Activated T-helper 1 cell treated with anti-CD3 and anti-CD28 coated beads, Interleukin-12 subunit alpha, Interleukin-12 subunit beta, Interleukin-2, Interleukin-4 antibody, amounts not matched to agents 30 ng/mL and 10 ng/mL and 1 ng/mL, durations not matched to agents 14 hours and 24 hours and 36 hours (primary cell): ENCODE measurements at regions of chr4 and their contacts with region 1.

Region 1: GRCh38 chr4:88533937-88534750 is 10.6 kb upstream of the PYURF start:
- DNase-seq: no peak
- H3K4me3 Mint-ChIP-seq: no peak overlapping the region
- H3K27ac Mint-ChIP-seq: no peak overlapping the region
- H3K4me1 Mint-ChIP-seq: peaks cover 6% of the 10 kb centered on the region
- H3K27me3 Mint-ChIP-seq: no peaks in the 10 kb centered on the region

Region 2: GRCh38 chr4:88659055-88659889 is 125.1 kb after region 1 on chr4:
- intact Hi-C with region 1: loop called (anchors 1 kb)
- DNase-seq: no peak
- H3K4me3 Mint-ChIP-seq: no peak overlapping the region
- H3K27ac Mint-ChIP-seq: no peak overlapping the region
- H3K4me1 Mint-ChIP-seq: peaks cover 12% of the 10 kb centered on the region
- H3K27me3 Mint-ChIP-seq: no peaks in the 10 kb centered on the region

Region 3: DNA sequence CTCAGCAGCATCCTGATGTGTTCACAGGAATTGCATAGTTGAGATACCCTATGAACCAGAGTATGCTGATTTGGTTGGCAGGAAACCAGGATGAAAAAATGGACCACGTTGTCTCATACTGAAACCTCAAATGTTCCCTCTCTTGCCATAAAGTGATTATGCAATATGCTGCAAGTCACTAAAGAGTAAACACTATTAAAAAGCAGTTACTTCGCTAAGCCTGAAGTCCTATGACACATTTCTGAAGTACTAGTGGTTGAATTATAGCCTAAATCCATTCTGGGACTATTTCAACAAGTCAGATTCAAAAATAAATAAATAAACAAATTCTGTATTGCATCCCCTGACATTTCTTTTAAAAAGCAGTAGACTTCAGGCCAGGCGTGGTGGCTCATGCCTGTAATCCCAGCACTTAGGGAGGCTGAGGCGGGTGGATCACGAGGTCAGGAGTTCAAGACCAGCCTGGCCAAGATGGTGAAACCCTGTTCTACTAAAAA is 269.5 kb after region 1 on chr4:
- intact Hi-C with region 1: loop called (anchors 5 kb)
- DNase-seq: peak; percentile 17
- H3K4me3 Mint-ChIP-seq: no peak overlapping the region
- H3K27ac Mint-ChIP-seq: no peak overlapping the region
- H3K4me1 Mint-ChIP-seq: peaks cover 13% of the 10 kb centered on the region
- H3K27me3 Mint-ChIP-seq: peaks cover 16% of the 10 kb centered on the region

Region 4: GRCh38 chr4:89024051-89024675 is 490.0 kb after region 1 on chr4:
- intact Hi-C with region 1: loop called (anchors 1 kb)
- DNase-seq: peak; percentile 42
- H3K4me3 Mint-ChIP-seq: no peak overlapping the region
- H3K27ac Mint-ChIP-seq: no peak overlapping the region
- H3K4me1 Mint-ChIP-seq: no peaks in the 10 kb centered on the region
- H3K27me3 Mint-ChIP-seq: peaks cover 5% of the 10 kb centered on the region